Colonic mucosa (tissue), 4 donors: ENCODE measurements at regions of chr11 and their contacts with region 1.

Region 1: GRCh38 chr11:22668005-22668796 is 1.8 kb downstream of the GAS2 start:
- DNase-seq: no peak
- H3K4me3 ChIP-seq: no peak overlapping the region
- H3K27ac ChIP-seq: no peak overlapping the region
- H3K4me1 ChIP-seq: no peaks in the 10 kb centered on the region
- H3K27me3 ChIP-seq: peaks cover 8% of the 10 kb centered on the region
- CTCF ChIP-seq: no peak

Region 2: DNA sequence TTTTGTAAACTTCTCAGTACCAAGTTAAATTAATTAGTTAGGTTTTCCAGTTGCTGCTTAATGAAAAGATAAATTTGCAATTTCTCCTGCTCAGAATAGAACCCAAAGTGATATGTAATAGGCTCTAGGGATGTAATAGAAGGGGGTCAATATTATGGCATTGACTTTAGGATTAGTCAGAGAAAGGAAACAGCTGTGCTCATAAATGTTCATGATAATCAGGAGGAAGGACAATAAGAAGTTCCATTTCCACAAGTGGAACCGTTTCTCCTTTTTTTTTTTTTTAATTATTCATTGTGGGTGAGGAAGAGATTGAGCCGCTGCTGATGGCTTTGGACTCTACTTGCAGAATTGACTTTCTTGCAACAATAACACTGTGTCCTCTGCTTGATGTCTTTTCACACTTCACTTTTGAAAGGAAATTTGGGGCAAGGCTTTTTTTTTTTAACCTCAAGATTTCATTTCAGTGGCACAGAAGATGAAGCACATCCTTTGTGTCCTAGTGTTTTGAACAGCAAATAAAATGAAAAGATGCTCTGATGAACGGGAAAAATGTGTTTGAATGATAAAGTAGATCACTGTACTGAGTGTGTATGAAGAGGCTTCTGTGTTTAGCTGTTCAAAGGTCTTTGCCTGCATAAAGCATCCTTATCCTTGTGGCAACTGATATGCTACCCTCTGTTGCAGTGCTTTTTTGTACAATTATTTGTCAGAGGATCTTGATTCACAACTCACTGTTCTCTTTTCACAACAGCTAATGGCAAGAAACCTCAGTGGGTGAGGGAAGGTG is 60.6 kb after region 1 on chr11:
- intact Hi-C with region 1: loop called (anchors 2 kb)
- DNase-seq: no peak
- H3K4me3 ChIP-seq: no peak overlapping the region
- H3K27ac ChIP-seq: no peak overlapping the region
- H3K4me1 ChIP-seq: no peaks in the 10 kb centered on the region
- H3K27me3 ChIP-seq: no peaks in the 10 kb centered on the region
- CTCF ChIP-seq: no peak

Region 3: DNA sequence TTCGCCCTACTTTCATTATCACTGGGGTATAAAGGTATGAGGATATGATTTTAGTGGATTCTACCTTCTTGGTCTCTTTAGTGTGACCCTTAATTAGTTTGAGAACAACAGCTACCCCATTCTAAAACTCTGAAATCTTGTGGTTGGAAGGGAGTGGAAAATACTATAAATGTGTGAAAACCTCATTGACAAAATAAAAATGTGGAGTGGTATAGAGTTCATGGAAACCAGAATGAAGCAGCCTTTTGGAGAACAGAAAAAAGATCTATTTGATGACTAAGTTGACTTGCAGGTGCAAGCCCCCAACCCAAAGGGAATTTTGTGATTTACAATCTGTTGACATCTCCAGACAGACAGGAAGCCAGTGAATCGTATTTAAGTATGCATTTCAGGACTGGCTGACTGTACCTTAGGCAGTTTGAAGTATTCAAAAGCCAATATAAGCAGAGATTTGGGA is 74.0 kb after region 1 on chr11:
- intact Hi-C with region 1: no loop called
- DNase-seq: no peak
- H3K4me3 ChIP-seq: no peak overlapping the region
- H3K27ac ChIP-seq: no peak overlapping the region
- H3K4me1 ChIP-seq: no peaks in the 10 kb centered on the region
- H3K27me3 ChIP-seq: no peaks in the 10 kb centered on the region
- CTCF ChIP-seq: no peak